Right lobe of liver (tissue), 6 donors: ENCODE measurements at regions of chr20 and their contacts with region 1.

Region 1: DNA sequence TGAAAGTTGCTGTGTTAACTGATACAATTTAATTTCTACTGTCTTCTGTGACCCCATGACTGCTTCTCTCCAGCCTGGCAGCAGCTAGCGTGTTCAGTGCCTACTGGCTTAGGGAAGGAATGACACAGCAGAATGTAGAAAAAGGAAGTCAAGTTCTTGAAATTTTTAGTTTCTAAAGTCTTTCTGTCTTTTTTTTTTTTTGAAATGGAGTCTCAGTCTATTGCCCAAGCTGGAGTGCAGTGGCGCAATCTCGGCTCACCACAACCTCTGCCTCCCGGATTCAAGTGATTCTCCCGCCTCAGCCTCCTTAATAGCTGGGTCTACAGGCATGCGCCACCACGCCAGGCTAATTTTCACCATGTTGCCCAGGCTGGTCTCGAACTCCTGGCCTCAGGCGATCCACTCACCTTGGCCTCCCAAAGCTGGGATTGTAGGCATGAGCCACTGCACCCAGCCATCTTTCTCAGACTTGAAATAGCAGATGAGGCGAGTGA is 39.3 kb downstream of the PCNA start:
- DNase-seq: peak; percentile 57 to 70 (median 60)
- ATAC-seq: peak; percentile 57 to 63 (median 60)
- H3K4me3 ChIP-seq: no peak overlapping the region
- H3K27ac ChIP-seq: peak overlapping the region in 1 of 3 donors; percentile 50
- H3K4me1 ChIP-seq: peaks cover 0 to 3% (median 0%) of the 10 kb centered on the region in 4 donors
- H3K27me3 ChIP-seq: no peaks in the 10 kb centered on the region
- CTCF ChIP-seq: no peak
- POLR2A ChIP-seq: no peak

Region 2: DNA sequence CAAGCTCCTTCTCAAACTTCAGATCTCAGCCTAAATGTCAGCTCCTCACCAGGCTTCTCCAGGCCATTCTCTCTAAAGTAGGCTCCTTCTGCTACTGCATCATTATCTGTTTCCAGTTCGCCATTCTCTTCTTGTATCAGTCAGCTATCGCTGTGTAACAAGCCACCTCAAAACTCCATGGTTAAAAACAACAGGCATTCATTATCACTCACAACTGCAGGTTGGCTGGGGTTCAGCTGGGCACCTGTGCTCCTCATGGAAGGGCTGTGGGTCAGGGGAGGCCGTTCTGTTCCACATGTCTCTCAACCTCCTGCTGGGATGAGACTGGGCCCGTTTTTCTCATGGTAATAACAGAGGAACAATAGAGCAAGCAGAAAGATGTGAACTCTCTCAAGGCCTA is 330.1 kb before region 1 on chr20:
- intact Hi-C with region 1: loop called in 1 of 2 experiments (anchors 10 kb)
- DNase-seq: no peak
- ATAC-seq: no peak
- H3K4me3 ChIP-seq: no peak overlapping the region
- H3K27ac ChIP-seq: no peak overlapping the region
- H3K4me1 ChIP-seq: no peaks in the 10 kb centered on the region
- H3K27me3 ChIP-seq: no peaks in the 10 kb centered on the region
- CTCF ChIP-seq: no peak
- POLR2A ChIP-seq: no peak

Region 3: GRCh38 chr20:5215672-5216304 is 135.4 kb after region 1 on chr20:
- intact Hi-C with region 1: no loop called
- DNase-seq: no peak
- ATAC-seq: peak; percentile 17 to 40 (median 32)
- H3K4me3 ChIP-seq: no peak overlapping the region
- H3K27ac ChIP-seq: peak overlapping the region in 1 of 3 donors; percentile 12
- H3K4me1 ChIP-seq: peaks cover 0 to 38% (median 7%) of the 10 kb centered on the region in 4 donors
- H3K27me3 ChIP-seq: no peaks in the 10 kb centered on the region
- CTCF ChIP-seq: no peak
- POLR2A ChIP-seq: no peak